Cardiac septum (tissue), 1 donor: ENCODE measurements at regions of chr1 and their contacts with region 1.

Region 1: DNA sequence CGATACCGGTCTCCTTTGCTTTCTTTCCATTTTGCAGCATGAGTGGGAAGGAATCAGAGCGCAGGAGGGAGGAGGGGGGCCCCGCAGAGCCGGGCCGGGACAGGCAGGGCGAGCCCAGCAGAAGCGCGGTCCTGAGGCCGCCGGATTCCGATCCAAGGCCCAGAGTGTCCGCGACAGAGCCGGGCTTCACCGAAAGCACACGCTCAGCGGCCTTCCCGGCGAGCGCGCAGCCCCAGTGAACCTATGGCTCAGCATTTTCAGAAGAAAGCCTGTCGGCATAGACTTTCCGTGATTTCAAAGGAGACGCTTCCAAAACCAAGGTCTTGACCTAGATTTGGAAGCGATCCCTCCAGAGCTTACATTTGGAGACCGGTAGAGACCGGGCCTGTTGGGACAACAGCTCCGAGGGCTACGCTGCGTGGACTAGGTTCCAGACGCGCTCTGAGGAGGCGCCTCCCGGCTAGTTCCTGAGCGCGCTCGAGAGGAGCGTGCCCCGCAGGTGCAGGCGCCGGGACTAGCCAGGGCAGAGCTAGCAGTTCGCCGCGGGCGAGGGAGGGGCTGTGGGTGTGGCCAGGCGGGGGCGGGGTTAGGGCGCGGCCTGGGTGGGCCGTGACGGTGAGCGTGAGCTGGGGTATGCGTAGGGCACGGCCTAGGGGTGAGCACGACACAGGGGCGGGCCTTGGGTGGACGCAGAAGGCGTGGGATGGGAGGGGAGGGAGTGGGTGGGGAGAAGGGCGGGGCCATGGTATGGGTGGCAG is 27.8 kb upstream of the PRSS38 start:
- DNase-seq: peak; percentile 94

Region 2: DNA sequence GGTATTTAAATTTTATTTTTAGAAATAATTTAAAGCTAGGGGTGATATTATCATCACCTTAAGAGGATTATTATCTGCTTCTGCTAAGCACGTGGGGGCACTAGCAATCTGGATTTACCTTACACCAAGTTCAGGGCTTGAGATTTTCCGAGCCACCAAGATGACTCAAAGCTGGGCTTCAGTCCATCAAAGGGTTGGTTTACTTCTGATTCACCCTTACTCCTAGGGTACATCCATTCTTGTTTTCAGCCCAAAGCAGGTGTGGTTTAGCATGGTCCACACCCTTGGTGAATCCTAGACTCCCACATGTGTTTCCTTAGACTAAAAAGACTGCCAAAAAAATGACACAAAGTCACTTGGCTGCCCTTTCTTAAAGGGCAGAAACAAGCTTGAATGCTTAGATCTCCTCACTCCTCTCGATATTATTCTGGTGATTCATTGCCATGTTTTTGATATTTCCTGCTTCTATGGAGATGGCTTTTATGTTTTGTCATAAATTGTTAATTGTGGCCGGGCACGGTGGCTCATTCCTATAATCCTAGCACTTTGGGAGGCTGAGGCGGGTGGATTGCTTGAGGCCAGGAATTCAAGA is 18.0 kb after region 1 on chr1:
- intact Hi-C with region 1: no loop called
- DNase-seq: no peak

Region 3: DNA sequence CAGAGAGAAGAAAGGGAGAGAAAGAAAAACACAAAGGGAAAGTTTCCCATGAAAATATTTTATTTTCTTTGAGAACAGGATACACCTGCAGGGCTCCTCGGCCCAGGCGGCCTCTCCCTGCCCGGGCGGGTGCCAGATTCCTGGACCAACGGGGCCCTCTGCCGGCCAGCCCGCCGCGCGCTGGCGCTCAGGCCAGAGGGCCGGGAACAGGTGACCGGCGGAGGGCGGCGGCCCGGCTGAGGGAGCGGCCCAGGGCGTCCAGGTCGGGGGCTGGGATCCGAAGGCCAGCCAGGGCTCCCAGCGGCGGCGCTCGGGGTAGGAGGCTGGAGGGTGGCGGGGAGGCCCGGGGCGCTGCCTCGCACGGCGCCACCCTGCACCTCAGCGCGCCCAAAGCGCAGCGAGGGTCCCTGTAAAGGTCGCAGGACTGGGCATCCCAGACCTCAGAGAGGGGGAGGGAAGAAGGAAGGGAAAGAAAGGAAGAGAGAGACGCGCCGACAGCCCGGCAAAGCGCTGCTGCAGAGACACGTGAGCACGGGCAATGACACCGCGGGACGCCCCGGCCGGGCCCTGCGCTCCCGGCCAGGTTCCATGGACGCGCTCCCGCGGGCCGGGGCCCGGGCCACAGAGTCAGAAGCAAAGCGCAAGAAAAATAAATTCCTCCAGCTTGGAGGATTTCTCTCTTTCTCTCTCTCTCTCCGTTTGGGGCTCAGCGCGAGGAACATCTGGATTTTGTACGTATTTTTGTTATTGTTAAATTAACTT is 159.1 kb after region 1 on chr1:
- intact Hi-C with region 1: loop called (anchors 2 kb)
- DNase-seq: peak; percentile 88